ENCODE measurements at regions of chr3 and their contacts with region 1.

Region 1: DNA sequence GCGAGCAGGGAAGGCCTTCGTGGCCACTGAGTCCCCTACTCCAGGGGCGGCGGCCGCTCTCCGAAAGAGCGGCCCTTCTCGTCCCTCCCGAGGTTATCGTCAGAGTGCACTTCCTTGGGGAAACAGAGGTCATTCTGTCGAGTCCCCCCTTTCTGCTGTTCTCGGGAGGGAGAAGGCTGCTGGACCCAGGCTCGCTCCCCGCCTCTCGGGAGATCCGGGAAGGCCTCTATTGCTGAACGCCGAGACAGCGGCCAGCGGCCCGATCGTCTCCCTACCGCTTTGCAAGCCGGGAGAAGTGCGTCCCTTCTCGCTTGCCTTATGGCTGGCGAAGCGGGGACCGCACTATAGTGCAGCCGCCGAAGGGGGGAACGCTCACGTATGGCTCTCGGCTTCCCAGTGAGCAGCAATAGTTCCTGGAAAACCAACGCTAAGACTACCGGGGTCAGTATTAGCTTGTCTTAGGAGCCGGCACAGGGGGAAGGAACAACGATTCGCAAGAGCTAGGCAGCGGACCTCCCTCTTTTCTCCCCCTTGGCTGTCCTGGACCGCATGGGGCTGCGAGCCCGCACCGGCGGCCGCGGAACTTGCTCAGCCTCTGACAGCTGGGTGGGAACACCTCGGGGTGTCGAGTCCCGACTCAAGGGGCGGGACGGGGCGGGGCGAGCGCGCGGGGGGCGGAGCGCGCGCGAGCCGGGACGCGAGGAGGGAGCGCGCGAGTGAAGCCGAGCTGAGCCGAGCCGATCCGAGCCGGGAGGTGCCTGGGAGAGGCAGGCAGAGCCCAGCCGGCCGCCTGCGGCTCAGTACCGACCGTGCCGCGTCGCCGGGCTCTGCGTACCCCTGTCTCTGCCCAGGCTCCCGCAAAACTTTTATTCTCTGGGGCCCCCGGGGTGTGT is 930 bp upstream of the PPM1L start:
- H3K4me3 ChIP-seq: peak overlapping the region; percentile 83
- H3K27ac ChIP-seq: peak overlapping the region; percentile 75
- H3K4me1 ChIP-seq: peaks cover 3% of the 10 kb centered on the region; the same call in 1 of the 2 replicates
- CTCF ChIP-seq: no peak

Region 2: GRCh38 chr3:160796813-160797164 is 41.7 kb after region 1 on chr3:
- CTCF ChIA-PET with region 1: interaction called, 3 read pairs
- POLR2A ChIA-PET with region 1: interaction called, 12 read pairs
- H3K4me3 ChIP-seq: no peak overlapping the region
- H3K27ac ChIP-seq: no peak overlapping the region
- H3K4me1 ChIP-seq: peaks cover 12% of the 10 kb centered on the region
- CTCF ChIP-seq: no peak